ENCODE measurements at regions of chr9 and their contacts with region 1.

Region 1: GRCh38 chr9:93566408-93567270 is 9.7 kb upstream of the PHF2 start:
- DNase-seq: peak; percentile 99
- H3K4me3 ChIP-seq: peak overlapping the region; percentile 57
- H3K27ac ChIP-seq: peak overlapping the region; percentile 96
- H3K4me1 ChIP-seq: peaks cover 8% of the 10 kb centered on the region
- H3K27me3 ChIP-seq: no peaks in the 10 kb centered on the region
- CTCF ChIP-seq: peak; percentile 82

Region 2: GRCh38 chr9:93444301-93444700 is 122.3 kb before region 1 on chr9:
- intact Hi-C with region 1: loop called (anchors 10 kb)
- DNase-seq: no peak
- H3K4me3 ChIP-seq: no peak overlapping the region
- H3K27ac ChIP-seq: no peak overlapping the region
- H3K4me1 ChIP-seq: no peaks in the 10 kb centered on the region
- H3K27me3 ChIP-seq: no peaks in the 10 kb centered on the region
- CTCF ChIP-seq: no peak